GM10248 (cell line): ENCODE measurements at regions of chr3 and their contacts with region 1.

Region 1: GRCh38 chr3:41304593-41304992 is 105.3 kb downstream of the CTNNB1 start:
- DNase-seq: no peak
- CTCF ChIP-seq: no peak

Region 2: GRCh38 chr3:41424543-41425300 is 120.1 kb after region 1 on chr3:
- CTCF ChIA-PET with region 1: no interaction called
- POLR2A ChIA-PET with region 1: interaction called, 10 read pairs
- DNase-seq: no peak
- CTCF ChIP-seq: no peak